ENCODE measurements at regions of chr17 and their contacts with region 1.

Region 1: GRCh38 chr17:76191896-76192295 is 48.4 kb downstream of the RNF157 start:
- DNase-seq: no peak
- ATAC-seq: no peak
- H3K4me3 ChIP-seq: no peak overlapping the region
- H3K27ac ChIP-seq: no peak overlapping the region
- H3K4me1 ChIP-seq: peaks cover 38% of the 10 kb centered on the region
- H3K27me3 ChIP-seq: no peaks in the 10 kb centered on the region
- CTCF ChIP-seq: no peak

Region 2: GRCh38 chr17:76232342-76232741 is 40.4 kb after region 1 on chr17:
- intact Hi-C with region 1: loop called in 1 of 2 experiments (anchors 5 kb)
- DNase-seq: no peak
- ATAC-seq: no peak
- H3K4me3 ChIP-seq: no peak overlapping the region
- H3K27ac ChIP-seq: no peak overlapping the region
- H3K4me1 ChIP-seq: peaks cover 20% of the 10 kb centered on the region
- H3K27me3 ChIP-seq: no peaks in the 10 kb centered on the region
- CTCF ChIP-seq: no peak

Region 3: GRCh38 chr17:76240461-76241203 is 48.7 kb after region 1 on chr17 and contains the start of gene RNF157:
- intact Hi-C with region 1: loop called in 1 of 2 experiments (anchors 5 kb)
- DNase-seq: peak; percentile 72 to 89
- ATAC-seq: peak; percentile 80 to 86 (median 82)
- H3K4me3 ChIP-seq: peak within 1 kb of the TSS; percentile 76
- H3K27ac ChIP-seq: peak within 1 kb of the TSS; percentile 94
- H3K4me1 ChIP-seq: peaks cover 35% of the 10 kb centered on the region
- H3K27me3 ChIP-seq: no peaks in the 10 kb centered on the region
- CTCF ChIP-seq: no peak
- total RNA-seq, gene RNF157: 35.0 to 76.5 (median 60.0) TPM

Region 4: GRCh38 chr17:76271669-76272540 is 80.0 kb after region 1 on chr17:
- intact Hi-C with region 1: loop called (anchors 5 kb)
- DNase-seq: peak; percentile 34 to 74
- ATAC-seq: peak; percentile 1 to 7 (median 2)
- H3K4me3 ChIP-seq: peak overlapping the region; percentile 47
- H3K27ac ChIP-seq: peak overlapping the region; percentile 94
- H3K4me1 ChIP-seq: peaks cover 64% of the 10 kb centered on the region
- H3K27me3 ChIP-seq: no peaks in the 10 kb centered on the region
- CTCF ChIP-seq: no peak